ENCODE measurements at regions of chr1 and their contacts with region 1.

Region 1: GRCh38 chr1:114757455-114758250 is at the start of gene CSDE1:
- DNase-seq: peak; percentile 97
- H3K4me3 ChIP-seq: peak within 1 kb of the TSS; percentile 85 to 98
- H3K27ac ChIP-seq: peak within 1 kb of the TSS; percentile 98 to 100
- H3K4me1 ChIP-seq: peaks cover 6% of the 10 kb centered on the region
- H3K27me3 ChIP-seq: no peaks in the 10 kb centered on the region
- CTCF ChIP-seq: peak in 2 of 4 experiments; percentile 44 to 46
- POLR2A ChIP-seq: peak; percentile 91
- total RNA-seq, gene CSDE1: 458 to 889 TPM

Region 2: GRCh38 chr1:113830039-113830438 is 927.6 kb before region 1 on chr1:
- intact Hi-C with region 1: no loop called
- DNase-seq: no peak
- H3K4me3 ChIP-seq: no peak overlapping the region
- H3K27ac ChIP-seq: no peak overlapping the region
- H3K4me1 ChIP-seq: no peaks in the 10 kb centered on the region
- H3K27me3 ChIP-seq: no peaks in the 10 kb centered on the region
- CTCF ChIP-seq: no peak
- POLR2A ChIP-seq: no peak

Region 3: GRCh38 chr1:114173680-114174281 is 583.9 kb before region 1 on chr1:
- intact Hi-C with region 1: no loop called
- DNase-seq: no peak
- H3K4me3 ChIP-seq: no peak overlapping the region
- H3K27ac ChIP-seq: no peak overlapping the region
- H3K4me1 ChIP-seq: no peaks in the 10 kb centered on the region
- H3K27me3 ChIP-seq: no peaks in the 10 kb centered on the region
- CTCF ChIP-seq: no peak
- POLR2A ChIP-seq: no peak

Region 4: GRCh38 chr1:114716304-114717170 is 41.1 kb before region 1 on chr1 and contains the start of gene NRAS:
- intact Hi-C with region 1: loop called (anchors 5 kb)
- DNase-seq: peak; percentile 92
- H3K4me3 ChIP-seq: peak within 1 kb of the TSS; percentile 73 to 80
- H3K27ac ChIP-seq: peak within 1 kb of the TSS; percentile 80 to 81
- H3K4me1 ChIP-seq: no peaks in the 10 kb centered on the region
- H3K27me3 ChIP-seq: no peaks in the 10 kb centered on the region
- CTCF ChIP-seq: peak in 2 of 4 experiments; percentile 16 to 19
- POLR2A ChIP-seq: peak; percentile 62
- total RNA-seq, gene NRAS: 23.4 to 24.6 TPM

Region 5: DNA sequence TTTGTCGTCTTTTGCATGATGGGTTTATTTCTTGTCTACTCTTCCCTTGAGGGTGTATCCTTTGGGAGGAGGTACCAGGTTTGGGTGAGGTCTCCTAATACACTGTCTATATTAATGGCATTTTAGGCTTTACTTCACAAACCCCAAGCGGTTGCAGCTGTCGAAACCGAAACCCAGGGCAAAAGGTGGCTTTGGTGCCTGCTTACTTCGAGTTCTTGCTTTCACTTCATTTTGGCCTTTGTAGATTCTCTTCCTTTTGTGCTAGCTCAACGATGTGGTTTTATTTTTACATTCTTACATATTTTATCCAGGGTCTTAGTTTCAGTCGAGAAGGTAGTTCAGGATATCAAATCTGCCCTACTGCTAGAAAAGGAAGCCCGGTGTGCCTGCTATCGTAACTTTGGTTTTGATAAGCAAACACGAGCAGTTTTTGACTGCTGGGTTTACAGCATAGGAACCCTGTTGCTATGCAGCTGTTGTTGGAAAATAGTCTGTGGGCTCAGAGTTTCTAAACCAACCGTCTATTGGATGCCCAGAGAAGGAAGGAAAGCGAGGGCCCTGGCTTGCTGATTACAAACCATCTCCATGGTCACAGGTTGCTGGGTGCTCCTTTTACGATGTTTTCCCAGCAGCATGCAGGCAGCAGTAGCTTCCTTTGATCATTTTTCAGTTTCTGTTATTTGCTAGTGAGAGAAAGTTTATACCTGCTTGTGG is 341.5 kb after region 1 on chr1:
- intact Hi-C with region 1: loop called (anchors 10 kb)
- DNase-seq: peak; percentile 76
- H3K4me3 ChIP-seq: peak overlapping the region; percentile 10 to 14
- H3K27ac ChIP-seq: peak overlapping the region; percentile 65 to 69
- H3K4me1 ChIP-seq: no peaks in the 10 kb centered on the region
- H3K27me3 ChIP-seq: no peaks in the 10 kb centered on the region
- CTCF ChIP-seq: no peak
- POLR2A ChIP-seq: peak; percentile 34